ENCODE measurements at regions of chr5 and their contacts with region 1.

Region 1: GRCh38 chr5:116343961-116344360 is 230.7 kb downstream of the SEMA6A start:
- DNase-seq: no peak
- CTCF ChIP-seq: no peak

Region 2: GRCh38 chr5:116299752-116300640 is 44.0 kb before region 1 on chr5:
- CTCF ChIA-PET with region 1: no interaction called
- POLR2A ChIA-PET with region 1: no interaction called
- DNase-seq: no peak
- CTCF ChIP-seq: no peak

Region 3: DNA sequence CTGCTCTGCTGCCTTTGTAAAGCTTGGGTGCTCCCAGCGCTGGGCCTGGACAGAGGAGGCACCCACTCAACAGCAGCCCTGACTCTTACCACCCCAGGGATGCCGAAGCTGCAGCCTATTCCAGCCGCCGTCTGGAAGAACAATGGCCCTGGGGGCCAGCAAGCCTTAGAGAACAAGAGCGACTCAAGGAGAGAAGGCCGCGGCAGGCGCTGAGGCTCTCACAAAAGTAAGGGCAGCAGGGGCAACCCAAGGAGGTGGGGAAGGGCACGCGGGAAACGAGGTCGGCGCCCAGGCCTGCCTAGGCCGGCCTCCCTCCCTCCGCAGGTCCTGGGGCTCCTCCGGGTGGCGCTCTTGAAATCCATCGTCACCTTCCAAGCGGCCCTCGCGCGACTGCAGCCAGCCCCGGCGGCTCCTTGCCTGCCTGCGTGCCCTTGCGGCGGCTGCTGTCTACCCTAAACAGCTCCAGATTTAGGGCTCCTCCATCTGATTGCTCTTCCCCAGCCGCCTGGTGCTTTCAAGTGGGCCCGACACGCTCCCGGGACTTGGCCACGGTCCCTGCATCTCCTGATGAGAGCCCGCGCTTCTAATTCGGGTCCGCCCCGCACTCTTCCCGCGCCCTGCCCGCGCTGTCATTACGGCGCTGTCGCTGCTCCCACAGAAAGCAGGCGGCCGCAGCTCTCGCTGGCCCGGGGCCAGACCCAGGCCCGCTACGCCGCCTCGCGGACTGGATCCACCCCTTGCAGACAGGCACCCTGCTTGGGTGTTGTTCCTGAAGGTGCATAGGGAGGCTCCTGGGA is 17.4 kb after region 1 on chr5:
- CTCF ChIA-PET with region 1: interaction called, 28 read pairs
- POLR2A ChIA-PET with region 1: no interaction called
- DNase-seq: no peak
- CTCF ChIP-seq: no peak

Measured in GM10248 (cell line).